ENCODE measurements at regions of chr1 and their contacts with region 1.

Region 1: GRCh38 chr1:182614796-182615454 is 10.7 kb upstream of the RGS16 start:
- DNase-seq: peak; percentile 67

Region 2: DNA sequence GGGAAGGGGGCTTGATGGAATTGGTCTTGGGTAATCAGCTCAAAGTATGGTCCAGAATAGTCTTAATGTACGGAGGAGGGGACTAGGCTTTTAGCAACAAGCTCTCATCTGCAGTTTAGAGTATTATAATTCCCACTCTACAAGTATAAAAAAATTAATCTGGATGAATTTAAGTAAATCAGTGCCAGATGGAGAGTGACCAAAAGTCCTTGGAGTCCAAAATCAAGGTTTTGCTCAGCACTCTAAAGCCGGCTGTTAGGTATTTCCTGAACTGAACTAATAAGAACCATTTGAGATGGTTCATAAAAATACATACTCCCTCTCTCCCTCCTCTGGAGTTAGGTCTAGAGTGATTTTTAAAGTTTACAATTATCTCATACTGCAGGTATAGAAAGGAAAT is 247.0 kb before region 1 on chr1:
- CTCF ChIA-PET with region 1: no interaction called
- POLR2A ChIA-PET with region 1: no interaction called
- DNase-seq: no peak

Region 3: GRCh38 chr1:182495002-182495401 is 119.9 kb before region 1 on chr1:
- CTCF ChIA-PET with region 1: no interaction called
- POLR2A ChIA-PET with region 1: no interaction called
- DNase-seq: no peak

Region 4: DNA sequence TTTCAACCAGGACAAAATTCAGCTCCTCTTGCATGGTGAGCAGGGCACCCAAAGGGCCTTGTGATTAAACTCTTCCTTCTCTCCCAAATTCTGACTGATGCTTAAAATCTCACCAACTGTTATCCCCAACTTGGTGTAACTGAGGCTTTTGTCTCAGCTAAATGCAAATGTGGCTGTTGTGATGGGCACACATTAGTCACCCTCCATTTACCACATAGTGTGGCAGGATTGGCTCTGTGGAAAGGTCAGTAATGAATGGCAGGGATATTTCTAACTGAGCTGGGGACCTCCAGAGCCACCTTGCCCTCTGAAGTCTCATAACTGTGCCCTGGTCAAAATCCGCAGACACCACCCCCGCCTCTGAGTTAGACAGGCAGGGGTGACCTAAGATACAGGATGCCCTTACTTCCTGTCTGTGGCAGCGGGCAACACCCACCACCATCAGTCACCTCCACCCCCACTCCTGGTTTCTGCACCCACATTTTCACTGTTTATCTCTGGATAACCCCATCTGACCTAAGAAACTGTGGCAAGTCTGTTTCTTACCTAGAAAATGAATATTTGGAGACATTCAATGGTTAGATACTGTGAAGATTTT is 14.7 kb after region 1 on chr1:
- CTCF ChIA-PET with region 1: interaction called, 3 read pairs
- POLR2A ChIA-PET with region 1: interaction called, 21 read pairs
- DNase-seq: no peak

Measured in HEK293T (cell line).